Left lung (tissue), 14 donors: ENCODE measurements at regions of chr13 and their contacts with region 1.

Region 1: GRCh38 chr13:109897988-109898624 is 111.7 kb upstream of the IRS2 start:
- DNase-seq: no peak
- ATAC-seq: no peak
- H3K4me3 ChIP-seq: no peak overlapping the region
- H3K27ac ChIP-seq: no peak overlapping the region
- H3K4me1 ChIP-seq: no peaks in the 10 kb centered on the region
- H3K27me3 ChIP-seq: no peaks in the 10 kb centered on the region
- CTCF ChIP-seq: no peak

Region 2: GRCh38 chr13:109998726-109999533 is 100.8 kb after region 1 on chr13:
- intact Hi-C with region 1: loop called in 1 of 2 experiments (anchors 10 kb)
- DNase-seq: no peak
- ATAC-seq: peak; percentile 26
- H3K4me3 ChIP-seq: no peak overlapping the region
- H3K27ac ChIP-seq: no peak overlapping the region
- H3K4me1 ChIP-seq: no peaks in the 10 kb centered on the region
- H3K27me3 ChIP-seq: peaks cover 0 to 18% of the 10 kb centered on the region in 2 donors
- CTCF ChIP-seq: no peak